ENCODE measurements at regions of chr16 and their contacts with region 1.

Region 1: DNA sequence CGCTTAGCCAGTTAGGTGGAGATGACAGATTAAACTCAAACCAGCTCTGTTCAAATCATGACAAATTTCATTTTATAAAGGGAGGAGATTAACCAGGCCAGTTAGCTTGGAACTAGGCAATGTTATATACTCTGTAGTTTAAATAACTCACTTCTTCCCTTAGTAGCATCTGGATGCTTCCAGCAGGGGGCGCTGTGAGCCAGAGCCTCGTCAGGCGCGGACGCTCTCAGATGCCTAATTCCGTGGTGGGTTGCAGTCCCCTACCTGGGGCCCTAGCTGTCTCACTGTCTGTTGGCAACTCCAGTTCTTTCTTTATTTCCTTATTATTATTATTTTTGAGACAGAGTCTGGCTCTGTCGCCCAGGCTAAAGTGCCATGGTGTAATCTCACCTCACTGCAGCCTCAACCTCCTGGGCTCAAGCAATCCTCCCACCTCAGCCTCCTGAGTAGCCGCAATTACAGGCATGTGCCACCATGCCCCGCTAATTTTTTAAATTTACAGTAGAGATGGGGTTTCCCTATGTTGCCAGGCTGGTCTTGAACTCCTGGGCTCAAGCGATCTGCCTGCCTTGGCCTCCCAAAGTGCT is 17.3 kb upstream of the WFDC1 start:
- DNase-seq: no peak
- H3K4me3 ChIP-seq: no peak overlapping the region
- CTCF ChIP-seq: peak; percentile 84

Region 2: DNA sequence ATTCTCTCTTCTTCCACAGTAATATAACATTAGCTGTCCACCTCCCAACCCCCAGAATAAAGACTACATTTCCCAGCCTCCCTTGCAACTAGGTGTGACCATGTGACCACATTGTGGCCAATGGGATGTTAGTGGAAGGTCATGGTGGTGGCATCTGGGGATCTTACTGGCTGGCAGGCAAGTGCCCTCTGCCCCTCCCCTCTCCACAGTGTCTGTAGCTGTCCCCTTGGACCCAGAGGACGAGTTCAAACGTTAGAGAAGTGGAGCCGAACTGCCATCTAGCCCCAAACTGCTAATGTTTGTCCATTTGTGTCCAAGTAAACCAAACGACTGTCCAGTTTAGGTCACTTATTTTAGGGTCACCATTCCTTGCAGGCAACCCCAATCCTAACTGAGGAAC is 10.9 kb before region 1 on chr16:
- CTCF ChIA-PET with region 1: interaction called, 52 read pairs
- POLR2A ChIA-PET with region 1: no interaction called
- DNase-seq: no peak
- H3K4me3 ChIP-seq: no peak overlapping the region
- CTCF ChIP-seq: no peak

Region 3: GRCh38 chr16:84308120-84308519 is 30.8 kb after region 1 on chr16:
- CTCF ChIA-PET with region 1: interaction called, 25 read pairs
- POLR2A ChIA-PET with region 1: no interaction called
- DNase-seq: no peak
- H3K4me3 ChIP-seq: no peak overlapping the region
- CTCF ChIP-seq: peak; percentile 74

Region 4: GRCh38 chr16:84498859-84499620 is 221.7 kb after region 1 on chr16:
- CTCF ChIA-PET with region 1: interaction called, 45 read pairs
- POLR2A ChIA-PET with region 1: no interaction called
- DNase-seq: no peak
- H3K4me3 ChIP-seq: no peak overlapping the region
- CTCF ChIP-seq: no peak